ENCODE measurements at regions of chr13 and their contacts with region 1.

Region 1: DNA sequence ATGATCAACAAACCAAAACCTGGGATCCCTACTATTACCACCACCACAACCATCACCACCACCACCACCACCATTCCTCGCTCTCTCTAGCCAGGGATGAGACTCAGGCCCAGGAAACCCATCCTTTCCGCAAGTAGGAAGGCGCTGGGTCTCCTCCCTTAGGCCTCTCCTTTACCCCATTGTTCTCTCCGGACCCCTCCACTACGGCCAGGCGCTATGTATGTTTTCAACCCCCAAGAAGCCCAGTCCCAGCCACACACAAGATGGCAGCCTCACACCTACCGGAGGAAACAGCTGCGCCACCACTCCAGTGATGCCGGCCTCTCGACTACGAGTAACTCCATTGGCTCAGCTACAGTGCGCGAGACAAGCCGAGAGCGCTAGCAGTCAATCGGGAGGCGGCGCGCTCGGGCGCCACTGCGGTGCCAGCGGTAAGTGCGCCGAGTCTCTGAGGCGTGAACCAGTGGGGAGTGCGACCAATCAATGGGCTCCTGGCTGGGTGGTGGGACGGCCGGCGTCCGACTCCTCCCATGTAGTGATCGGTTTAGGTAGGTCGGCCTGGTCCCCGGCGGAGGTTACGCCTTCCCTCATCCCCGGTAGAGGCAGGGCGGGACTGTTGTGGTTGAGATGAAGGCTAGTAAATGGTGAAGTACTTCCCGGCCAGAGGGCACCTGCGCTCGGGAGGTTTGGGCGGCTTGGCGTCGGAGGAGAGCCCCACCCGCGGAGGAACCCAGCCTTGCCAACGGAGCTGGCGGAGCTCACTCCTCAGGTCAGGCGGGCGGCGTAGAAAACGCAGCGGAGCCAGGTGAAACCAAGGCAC is at the starts of genes CAB39L and SETDB2:
- DNase-seq: peak; percentile 100
- H3K4me3 ChIP-seq: peak within 1 kb of the TSS; percentile 69 to 79
- H3K27ac ChIP-seq: peak within 1 kb of the TSS; percentile 93 to 94
- H3K4me1 ChIP-seq: peaks cover 3% of the 10 kb centered on the region
- H3K27me3 ChIP-seq: no peaks in the 10 kb centered on the region
- CTCF ChIP-seq: peak in 2 of 4 experiments; percentile 73 to 79
- POLR2A ChIP-seq: peak; percentile 91
- total RNA-seq, gene CAB39L: 43.9 to 96.5 TPM
- total RNA-seq, gene SETDB2: 9.0 to 17.6 TPM

Region 2: DNA sequence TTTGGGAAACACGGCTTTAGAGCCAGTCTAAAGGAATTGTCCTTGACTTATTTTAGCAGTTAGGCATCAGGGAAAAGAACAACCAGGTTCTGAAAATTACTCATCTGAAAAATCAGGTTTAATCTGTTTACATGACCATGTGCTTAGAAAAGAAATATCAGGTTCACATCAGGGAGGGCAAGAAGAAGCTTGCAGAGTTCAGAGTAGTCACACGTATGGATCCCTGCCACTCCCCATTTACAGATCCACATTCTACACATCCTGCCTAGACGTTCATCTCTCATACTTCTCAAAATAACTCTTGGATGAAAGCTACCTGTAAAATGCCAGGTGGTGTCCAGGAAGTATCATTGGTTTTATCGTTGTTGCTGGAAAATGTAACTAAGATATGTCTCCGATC is 37.9 kb after region 1 on chr13:
- intact Hi-C with region 1: no loop called
- DNase-seq: no peak
- H3K4me3 ChIP-seq: no peak overlapping the region
- H3K27ac ChIP-seq: no peak overlapping the region
- H3K4me1 ChIP-seq: no peaks in the 10 kb centered on the region
- H3K27me3 ChIP-seq: no peaks in the 10 kb centered on the region
- CTCF ChIP-seq: no peak
- POLR2A ChIP-seq: no peak

Region 3: DNA sequence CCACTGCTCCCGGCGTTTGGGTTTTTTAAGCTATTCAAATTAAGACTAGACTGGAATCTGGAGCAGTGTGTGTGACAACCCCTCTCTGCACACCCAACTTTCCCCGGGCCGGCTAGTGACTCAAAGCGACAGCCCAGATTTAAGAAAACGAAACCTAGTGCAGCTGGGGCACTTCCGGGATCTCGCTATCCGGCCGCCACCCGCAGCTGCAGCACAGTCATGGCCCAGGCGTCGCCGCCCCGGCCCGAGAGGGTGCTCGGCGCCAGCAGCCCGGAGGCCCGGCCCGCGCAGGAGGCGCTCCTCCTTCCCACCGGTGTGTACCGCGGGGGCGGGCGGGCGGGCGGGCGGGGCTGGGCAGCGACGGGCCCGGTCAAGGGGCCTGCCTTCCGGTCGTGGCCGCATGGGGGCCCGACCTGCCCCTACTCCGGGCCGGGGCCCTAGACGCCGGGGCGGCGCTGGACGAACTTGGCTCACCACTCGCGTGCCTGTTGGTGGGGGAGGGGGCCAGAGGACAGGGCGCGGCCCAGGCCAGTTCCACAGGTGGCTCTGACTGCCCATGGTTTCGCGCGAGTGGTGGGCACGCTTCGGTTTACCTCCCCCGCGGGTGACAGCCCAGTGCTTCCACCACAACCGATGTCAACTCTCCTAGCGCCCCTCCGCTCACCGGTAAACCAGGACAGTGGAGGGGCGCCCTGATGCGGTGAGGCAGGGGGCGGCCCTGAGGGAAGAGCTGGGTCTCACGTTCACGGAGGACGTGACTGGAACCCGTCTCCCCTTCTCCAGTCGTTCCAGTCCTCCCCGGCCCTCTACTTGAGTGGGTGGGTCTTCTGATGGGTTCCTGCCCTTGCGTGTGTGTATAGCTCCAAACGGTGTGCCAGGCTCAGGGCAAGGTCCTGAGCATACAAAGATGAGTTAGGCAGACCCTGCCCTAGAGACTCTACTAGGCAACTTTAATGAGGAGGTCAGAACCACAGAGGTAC is 52.2 kb after region 1 on chr13 and contains the start of gene PHF11:
- intact Hi-C with region 1: loop called (anchors 5 kb)
- DNase-seq: peak; percentile 77
- H3K4me3 ChIP-seq: peak within 1 kb of the TSS; percentile 58 to 65
- H3K27ac ChIP-seq: peak within 1 kb of the TSS; percentile 92 to 95
- H3K4me1 ChIP-seq: no peaks in the 10 kb centered on the region
- H3K27me3 ChIP-seq: no peaks in the 10 kb centered on the region
- CTCF ChIP-seq: no peak
- POLR2A ChIP-seq: peak; percentile 46
- total RNA-seq, gene PHF11: 28.5 to 29.5 TPM

Region 4: DNA sequence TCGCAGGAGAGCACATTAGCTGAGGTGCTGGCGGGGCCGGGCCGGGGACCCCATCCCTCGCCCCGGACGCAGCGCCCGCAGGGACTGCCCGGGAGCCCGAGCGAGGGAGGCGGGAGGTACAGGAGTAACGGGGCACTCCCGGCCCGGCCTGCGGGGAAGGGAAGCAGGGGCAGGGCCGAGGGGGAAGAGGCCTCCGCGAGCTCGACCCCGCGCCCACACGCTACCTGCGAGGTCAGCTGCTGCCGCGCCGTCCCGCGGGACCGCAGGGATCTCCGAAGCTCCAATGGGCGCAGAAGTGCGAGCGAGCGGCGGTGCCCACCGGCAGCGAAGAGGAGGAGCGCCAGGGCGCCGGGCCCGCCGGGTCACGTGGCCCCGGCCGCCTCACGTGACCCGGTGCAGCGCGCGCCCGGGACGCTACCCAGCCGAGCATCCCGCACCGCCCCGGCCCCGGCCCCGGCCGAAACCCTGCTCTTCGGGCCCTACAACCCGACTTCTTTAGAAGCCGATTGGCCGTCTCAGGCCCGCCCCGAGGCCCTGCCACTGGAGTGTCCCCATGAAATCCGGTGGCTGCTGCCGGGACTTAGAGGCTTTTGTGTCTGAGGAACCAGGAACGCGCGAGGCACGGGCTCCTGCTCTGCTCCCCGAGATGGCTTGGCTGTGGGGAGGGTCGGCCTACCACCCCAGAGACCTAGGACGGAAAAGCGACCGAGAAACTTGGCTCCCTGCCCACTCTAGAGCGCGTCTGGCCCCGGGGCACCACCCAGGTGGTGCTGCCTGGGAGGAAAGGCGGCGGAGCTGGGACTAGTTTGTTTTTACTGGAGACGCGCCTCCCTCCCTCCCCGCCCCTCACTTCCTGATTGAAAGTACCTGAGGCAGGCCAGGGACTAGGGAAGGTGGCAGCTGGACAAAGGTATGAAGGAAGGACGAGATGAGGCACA is 141.6 kb after region 1 on chr13 and contains the start of gene RCBTB1:
- intact Hi-C with region 1: loop called (anchors 5 kb)
- DNase-seq: peak; percentile 74
- H3K4me3 ChIP-seq: peak within 1 kb of the TSS; percentile 89 to 90
- H3K27ac ChIP-seq: peak within 1 kb of the TSS; percentile 76 to 83
- H3K4me1 ChIP-seq: no peaks in the 10 kb centered on the region
- H3K27me3 ChIP-seq: no peaks in the 10 kb centered on the region
- CTCF ChIP-seq: no peak
- POLR2A ChIP-seq: peak; percentile 16
- total RNA-seq, gene RCBTB1: 15.7 to 29.4 TPM

Region 5: GRCh38 chr13:49606747-49607648 is 163.1 kb after region 1 on chr13:
- intact Hi-C with region 1: loop called (anchors 5 kb)
- DNase-seq: peak; percentile 88
- H3K4me3 ChIP-seq: peak overlapping the region; percentile 9 to 19
- H3K27ac ChIP-seq: no peak overlapping the region
- H3K4me1 ChIP-seq: no peaks in the 10 kb centered on the region
- H3K27me3 ChIP-seq: no peaks in the 10 kb centered on the region
- CTCF ChIP-seq: peak; percentile 27 to 85 (median 78)
- POLR2A ChIP-seq: no peak

Measured in prostate gland (tissue), 2 donors.